Ascending aorta (tissue), 2 donors: ENCODE measurements at regions of chr22 and their contacts with region 1.

Region 1: DNA sequence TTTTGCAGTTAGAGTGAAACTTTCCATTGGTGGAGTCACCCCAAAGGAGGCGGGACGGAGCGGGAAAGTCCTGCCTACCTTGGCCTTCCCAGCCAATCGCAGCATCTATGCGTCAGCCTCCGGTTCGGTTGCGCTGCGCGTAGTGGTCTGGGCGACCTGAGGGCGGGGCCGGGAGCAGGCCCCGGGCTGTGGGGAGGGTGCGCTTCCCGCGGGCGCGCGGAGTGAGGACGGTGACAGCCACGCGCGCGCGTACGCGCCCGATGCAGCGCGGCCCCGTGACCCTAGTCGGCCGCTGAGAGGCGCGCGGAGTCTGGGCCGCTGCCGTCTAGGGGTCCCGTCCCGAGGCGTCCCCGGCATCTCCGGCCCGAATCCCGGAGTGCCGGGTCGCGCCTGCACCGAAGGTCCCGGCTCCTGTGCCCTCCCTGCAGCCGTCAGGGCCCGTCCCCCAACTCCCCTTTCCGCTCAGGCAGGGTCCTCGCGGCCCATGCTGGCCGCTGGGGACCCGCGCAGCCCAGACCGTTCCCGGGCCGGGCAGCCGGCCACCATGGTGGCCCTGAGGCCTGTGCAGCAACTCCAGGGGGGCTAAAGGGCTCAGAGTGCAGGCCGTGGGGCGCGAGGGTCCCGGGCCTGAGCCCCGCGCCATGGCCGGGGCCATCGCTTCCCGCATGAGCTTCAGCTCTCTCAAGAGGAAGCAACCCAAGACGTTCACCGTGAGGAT is at the start of gene NF2:
- DNase-seq: peak; percentile 97 to 99
- H3K4me3 ChIP-seq: peak within 1 kb of the TSS; percentile 78 to 92
- H3K27ac ChIP-seq: peak within 1 kb of the TSS; percentile 83 to 92
- H3K4me1 ChIP-seq: peaks cover 0 to 10% of the 10 kb centered on the region in 2 donors
- H3K27me3 ChIP-seq: no peaks in the 10 kb centered on the region
- CTCF ChIP-seq: no peak
- total RNA-seq, gene NF2: 37.3 TPM

Region 2: DNA sequence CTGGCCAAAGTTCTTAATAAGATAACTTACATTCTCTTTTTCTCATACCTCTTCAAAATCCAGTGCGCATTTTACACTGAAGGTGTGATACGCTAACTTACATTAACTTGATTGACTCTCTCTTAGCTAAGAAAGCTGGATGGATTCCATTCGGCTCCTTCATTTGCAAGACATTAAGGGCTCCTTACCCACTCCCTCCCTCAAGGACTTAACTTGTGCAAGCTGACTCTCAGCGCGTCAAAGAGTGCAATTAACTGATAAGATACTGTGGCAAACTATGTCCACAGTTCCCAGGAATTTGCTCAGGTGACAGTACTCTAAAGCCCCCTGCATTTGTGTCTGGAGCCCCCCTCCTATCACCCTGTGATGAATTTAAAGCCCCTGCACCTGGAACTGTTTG is 171.5 kb before region 1 on chr22:
- intact Hi-C with region 1: no loop called
- DNase-seq: no peak
- H3K4me3 ChIP-seq: no peak overlapping the region
- H3K27ac ChIP-seq: no peak overlapping the region
- H3K4me1 ChIP-seq: no peaks in the 10 kb centered on the region
- H3K27me3 ChIP-seq: no peaks in the 10 kb centered on the region
- CTCF ChIP-seq: no peak

Region 3: GRCh38 chr22:29553351-29554224 is 49.9 kb before region 1 on chr22 and contains the start of gene THOC5:
- intact Hi-C with region 1: loop called (anchors 1 kb)
- DNase-seq: peak; percentile 74 to 95
- H3K4me3 ChIP-seq: peak within 1 kb of the TSS; percentile 74 to 82
- H3K27ac ChIP-seq: peak within 1 kb of the TSS; percentile 84 to 85
- H3K4me1 ChIP-seq: peaks cover 4 to 7% of the 10 kb centered on the region in 2 donors
- H3K27me3 ChIP-seq: no peaks in the 10 kb centered on the region
- CTCF ChIP-seq: peak; percentile 56 to 75 (median 74)
- total RNA-seq, gene THOC5: 21.5 TPM

Region 4: DNA sequence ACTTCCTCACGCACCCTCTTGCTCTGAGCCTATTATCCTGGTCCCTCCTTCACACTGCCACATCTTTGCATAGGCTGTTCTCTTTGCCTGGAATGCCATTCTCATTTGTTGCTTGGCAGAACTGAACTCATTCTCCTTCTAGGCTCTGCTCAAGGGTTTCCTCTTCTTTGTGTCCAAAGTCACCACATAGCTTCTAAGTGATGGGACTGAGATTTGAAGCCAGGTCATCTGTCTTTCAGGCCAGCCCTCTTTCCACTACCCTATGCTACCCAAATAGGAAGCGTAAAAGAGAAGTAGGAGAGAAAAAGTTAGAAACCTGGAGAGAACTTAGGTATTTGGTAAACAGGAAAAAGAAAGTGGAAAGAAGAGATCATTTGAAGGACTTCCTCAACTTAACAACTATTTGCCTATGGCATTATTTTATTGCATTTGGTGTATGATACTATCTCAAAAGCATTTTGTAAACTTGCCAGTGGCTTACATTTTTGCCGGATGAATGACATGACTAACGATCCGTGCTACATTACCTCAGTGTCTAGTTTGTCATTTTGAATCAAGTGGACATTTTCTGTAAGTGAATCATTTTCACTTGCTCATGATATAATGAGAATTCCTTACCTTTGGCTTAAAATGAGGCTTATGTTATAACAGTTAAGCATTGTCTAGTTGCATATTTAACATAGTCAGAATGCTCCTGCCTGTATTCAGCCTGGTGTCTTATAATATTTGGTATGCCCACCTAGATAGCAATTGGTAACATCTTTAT is 18.4 kb after region 1 on chr22:
- intact Hi-C with region 1: loop called (anchors 2 kb)
- DNase-seq: no peak
- H3K4me3 ChIP-seq: no peak overlapping the region
- H3K27ac ChIP-seq: peak overlapping the region; percentile 40 to 68
- H3K4me1 ChIP-seq: peaks cover 0 to 16% of the 10 kb centered on the region in 2 donors
- H3K27me3 ChIP-seq: no peaks in the 10 kb centered on the region
- CTCF ChIP-seq: no peak

Region 5: GRCh38 chr22:29837780-29838598 is 234.5 kb after region 1 on chr22 and contains the start of gene ASCC2:
- intact Hi-C with region 1: loop called (anchors 1 kb)
- DNase-seq: peak; percentile 95 to 100
- H3K4me3 ChIP-seq: peak within 1 kb of the TSS; percentile 69 to 71
- H3K27ac ChIP-seq: peak within 1 kb of the TSS; percentile 68 to 83
- H3K4me1 ChIP-seq: peaks cover 5 to 13% of the 10 kb centered on the region in 2 donors
- H3K27me3 ChIP-seq: no peaks in the 10 kb centered on the region
- CTCF ChIP-seq: peak in 1 of 3 experiments; percentile 8
- total RNA-seq, gene ASCC2: 24.9 TPM

Region 6: GRCh38 chr22:30326706-30327362 is 723.3 kb after region 1 on chr22 and contains the start of gene TBC1D10A:
- intact Hi-C with region 1: loop called (anchors 5 kb)
- DNase-seq: peak; percentile 80 to 95
- H3K4me3 ChIP-seq: peak within 1 kb of the TSS; percentile 95 to 100
- H3K27ac ChIP-seq: peak within 1 kb of the TSS; percentile 94 to 95
- H3K4me1 ChIP-seq: peaks cover 10 to 39% of the 10 kb centered on the region in 2 donors
- H3K27me3 ChIP-seq: no peaks in the 10 kb centered on the region
- CTCF ChIP-seq: no peak
- total RNA-seq, gene TBC1D10A: 107 TPM

Region 7: GRCh38 chr22:30372915-30373314 is 769.4 kb after region 1 on chr22:
- intact Hi-C with region 1: no loop called
- DNase-seq: no peak
- H3K4me3 ChIP-seq: no peak overlapping the region
- H3K27ac ChIP-seq: no peak overlapping the region
- H3K4me1 ChIP-seq: no peaks in the 10 kb centered on the region
- H3K27me3 ChIP-seq: no peaks in the 10 kb centered on the region
- CTCF ChIP-seq: no peak